Activated T-helper 1 cell treated with anti-CD3 and anti-CD28 coated beads, Interleukin-12 subunit alpha, Interleukin-12 subunit beta, Interleukin-2, Interleukin-4 antibody, amounts not matched to agents 30 ng/mL and 10 ng/mL and 1 ng/mL, durations not matched to agents 14 hours and 24 hours and 36 hours (primary cell): ENCODE measurements at regions of chr9 and their contacts with region 1.

Region 1: GRCh38 chr9:101530077-101530711 is 3.5 kb upstream of the RNF20 start:
- DNase-seq: peak; percentile 58
- H3K4me3 Mint-ChIP-seq: no peak overlapping the region
- H3K27ac Mint-ChIP-seq: no peak overlapping the region
- H3K4me1 Mint-ChIP-seq: peaks cover 23% of the 10 kb centered on the region
- H3K27me3 Mint-ChIP-seq: peaks cover 12% of the 10 kb centered on the region

Region 2: GRCh38 chr9:100160021-100160420 is 1370.2 kb before region 1 on chr9:
- intact Hi-C with region 1: no loop called
- DNase-seq: no peak
- H3K4me3 Mint-ChIP-seq: no peak overlapping the region
- H3K27ac Mint-ChIP-seq: no peak overlapping the region
- H3K4me1 Mint-ChIP-seq: no peaks in the 10 kb centered on the region
- H3K27me3 Mint-ChIP-seq: no peaks in the 10 kb centered on the region

Region 3: GRCh38 chr9:100714372-100715099 is 815.7 kb before region 1 on chr9:
- intact Hi-C with region 1: loop called (anchors 2 kb)
- DNase-seq: peak; percentile 12
- H3K4me3 Mint-ChIP-seq: no peak overlapping the region
- H3K27ac Mint-ChIP-seq: no peak overlapping the region
- H3K4me1 Mint-ChIP-seq: no peaks in the 10 kb centered on the region
- H3K27me3 Mint-ChIP-seq: no peaks in the 10 kb centered on the region

Region 4: DNA sequence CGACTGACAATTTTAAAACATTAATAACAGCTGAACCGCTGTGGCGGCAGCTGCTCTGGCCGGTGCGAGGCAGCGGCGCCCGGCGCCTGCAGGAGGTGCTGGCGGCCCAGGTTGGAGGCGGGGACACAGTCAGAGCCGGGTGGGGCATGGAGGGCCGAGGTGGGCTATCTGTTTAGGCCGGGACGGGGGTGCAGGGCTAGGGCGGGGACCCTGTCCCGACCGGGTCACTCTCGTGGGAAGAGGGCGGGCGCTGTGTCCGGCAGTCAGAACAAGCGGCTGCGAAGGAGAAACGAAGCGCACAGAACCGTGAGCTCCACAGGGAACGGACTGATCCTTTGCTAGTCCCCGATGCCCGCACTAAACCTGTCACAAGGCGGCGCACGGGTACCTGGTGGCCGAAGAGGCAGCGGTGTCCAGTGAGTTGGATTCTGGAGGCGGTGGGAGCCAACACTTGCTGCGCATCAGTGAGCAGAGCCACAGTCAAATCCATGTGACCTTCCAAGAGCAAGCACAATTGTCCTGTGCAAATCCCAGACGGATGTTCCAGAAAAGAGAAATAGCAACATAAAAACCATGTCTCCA is 81.0 kb before region 1 on chr9:
- intact Hi-C with region 1: loop called (anchors 2 kb)
- DNase-seq: peak; percentile 3
- H3K4me3 Mint-ChIP-seq: peak overlapping the region; percentile 40
- H3K27ac Mint-ChIP-seq: no peak overlapping the region
- H3K4me1 Mint-ChIP-seq: peaks cover 5% of the 10 kb centered on the region
- H3K27me3 Mint-ChIP-seq: peaks cover 30% of the 10 kb centered on the region

Region 5: DNA sequence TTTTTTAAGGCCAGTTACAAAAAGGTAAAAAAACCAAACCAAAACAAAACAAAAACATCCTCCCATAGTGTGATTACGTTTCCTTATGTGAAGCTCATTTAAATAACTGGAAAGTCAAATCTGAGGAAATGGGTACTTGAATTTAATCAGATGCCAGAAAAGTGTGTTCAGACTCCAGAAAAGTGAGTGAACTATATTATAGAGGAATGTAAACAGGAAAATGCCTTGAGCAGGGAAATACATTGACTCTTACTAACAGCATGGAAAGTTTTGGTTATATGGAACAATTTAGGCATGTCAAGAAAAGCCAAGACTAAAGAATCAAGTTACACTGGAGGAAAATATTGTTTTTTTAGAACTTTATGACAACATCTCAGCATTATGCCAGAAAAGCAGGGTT is 34.4 kb before region 1 on chr9:
- intact Hi-C with region 1: loop called (anchors 2 kb)
- DNase-seq: no peak
- H3K4me3 Mint-ChIP-seq: no peak overlapping the region
- H3K27ac Mint-ChIP-seq: no peak overlapping the region
- H3K4me1 Mint-ChIP-seq: no peaks in the 10 kb centered on the region
- H3K27me3 Mint-ChIP-seq: peaks cover 5% of the 10 kb centered on the region